ENCODE measurements at regions of chr3 and their contacts with region 1.

Region 1: GRCh38 chr3:188262913-188263683 is 109.1 kb downstream of the LPP start:
- DNase-seq: peak in 4 of 5 donors; percentile 47 to 60 (median 50)
- ATAC-seq: peak; percentile 79 to 88 (median 86)
- H3K4me3 ChIP-seq: no peak overlapping the region
- H3K27ac ChIP-seq: peak overlapping the region; percentile 74 to 96 (median 89)
- H3K4me1 ChIP-seq: peaks cover 2 to 94% (median 64%) of the 10 kb centered on the region in 12 donors
- H3K27me3 ChIP-seq: no peaks in the 10 kb centered on the region
- CTCF ChIP-seq: peak in 1 of 12 donors; percentile 7
- POLR2A ChIP-seq: no peak

Region 2: DNA sequence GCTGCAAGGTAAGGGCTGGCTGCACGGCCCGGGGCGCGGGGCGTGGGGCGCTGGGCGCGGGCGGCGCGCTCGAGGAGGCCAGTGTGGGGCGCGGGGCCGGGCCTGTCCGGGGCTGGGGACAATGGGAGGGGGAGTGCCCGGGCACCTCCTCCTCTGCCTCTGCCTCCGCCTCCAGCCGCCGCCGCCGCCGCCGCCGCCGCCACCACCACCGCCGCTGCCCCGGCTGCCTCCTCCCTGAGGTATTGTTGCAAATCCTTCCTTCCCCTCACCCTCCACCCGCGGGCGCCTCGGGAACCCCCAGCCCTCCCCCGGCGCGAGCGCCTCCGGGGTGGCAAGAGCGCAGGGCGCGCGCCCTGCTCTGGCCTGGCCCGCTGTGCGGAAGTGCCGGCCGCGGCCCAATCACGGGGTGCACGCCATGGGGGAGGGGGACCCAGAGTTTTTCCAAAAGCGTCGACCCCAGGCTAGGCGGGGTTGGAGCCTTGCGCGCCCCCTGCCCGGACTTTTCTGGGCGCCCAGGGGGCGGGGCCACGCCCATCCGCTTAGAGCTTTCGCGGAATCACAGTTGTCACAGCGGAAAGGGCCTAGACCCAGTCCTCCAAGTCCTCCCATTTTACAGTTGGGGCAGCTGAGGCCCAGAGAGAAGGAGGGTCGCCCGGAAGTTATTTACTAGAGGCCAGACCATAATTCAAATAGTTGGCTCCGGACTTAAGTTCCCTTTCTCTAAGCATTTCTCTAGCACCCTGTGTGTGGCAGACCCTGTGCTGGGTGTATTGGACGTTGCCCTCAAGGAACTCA is 108.9 kb before region 1 on chr3 and contains the start of gene LPP:
- intact Hi-C with region 1: loop called in 5 of 10 experiments (anchors 5 to 10 kb)
- DNase-seq: peak; percentile 83 to 92 (median 86)
- ATAC-seq: peak; percentile 67 to 93 (median 82)
- H3K4me3 ChIP-seq: peak within 1 kb of the TSS; percentile 68 to 94 (median 86)
- H3K27ac ChIP-seq: peak within 1 kb of the TSS; percentile 90 to 99 (median 97)
- H3K4me1 ChIP-seq: peaks cover 0 to 62% (median 41%) of the 10 kb centered on the region in 12 donors
- H3K27me3 ChIP-seq: no peaks in the 10 kb centered on the region
- CTCF ChIP-seq: peak in 2 of 12 donors; percentile 7 to 25
- POLR2A ChIP-seq: no peak
- total RNA-seq, gene LPP: 76.6 to 178 (median 111) TPM

Region 3: DNA sequence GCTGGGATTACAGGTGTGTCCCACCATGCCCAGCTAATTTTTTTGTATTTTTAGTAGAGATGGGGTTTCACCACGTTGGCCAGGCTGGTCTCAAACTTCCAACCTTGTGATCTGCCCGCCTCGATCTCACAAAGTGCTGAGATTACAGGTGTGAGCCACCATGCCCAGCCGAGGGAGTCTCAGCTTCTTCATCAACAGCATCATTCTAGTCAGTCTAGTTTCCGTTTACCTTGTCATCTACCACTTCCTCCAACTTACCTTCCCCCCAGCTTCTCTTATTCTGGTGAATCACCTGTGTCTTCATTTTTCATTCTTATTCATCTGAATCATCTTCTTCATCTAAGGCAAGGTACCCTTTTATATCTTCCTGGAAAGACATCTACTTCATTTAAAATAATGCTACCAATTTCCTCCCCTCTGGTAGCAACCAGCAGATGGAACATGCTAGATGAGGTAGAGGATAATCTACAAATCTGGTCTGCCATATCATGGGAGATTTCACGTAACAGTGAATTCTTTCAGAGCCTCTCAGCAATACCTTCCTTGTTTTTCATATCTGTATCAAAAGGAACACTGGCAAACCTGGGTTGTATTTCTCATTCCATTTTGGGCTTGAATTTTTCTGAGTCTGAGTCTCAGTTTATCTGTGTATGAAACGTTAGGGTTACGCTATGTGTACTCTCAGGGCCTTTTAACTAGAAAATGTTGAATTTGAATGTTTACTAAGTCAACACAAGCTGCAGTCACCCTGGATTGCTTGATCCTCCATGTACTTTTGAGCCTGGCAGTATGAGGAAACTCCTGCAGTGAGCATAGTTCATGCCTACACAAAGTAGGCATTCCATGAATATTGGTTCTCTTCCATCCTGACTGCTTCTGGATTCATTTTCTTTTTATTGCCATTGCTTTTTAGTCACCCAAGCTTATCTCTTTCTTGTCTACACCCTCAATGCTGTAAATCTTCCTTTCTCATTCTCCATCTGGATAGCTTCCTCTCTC is 92.3 kb before region 1 on chr3:
- intact Hi-C with region 1: no loop called
- DNase-seq: no peak
- ATAC-seq: no peak
- H3K4me3 ChIP-seq: no peak overlapping the region
- H3K27ac ChIP-seq: peak overlapping the region in 11 of 12 donors; percentile 6 to 86 (median 67)
- H3K4me1 ChIP-seq: peaks cover 0 to 82% (median 48%) of the 10 kb centered on the region in 12 donors
- H3K27me3 ChIP-seq: no peaks in the 10 kb centered on the region
- CTCF ChIP-seq: no peak
- POLR2A ChIP-seq: no peak

Region 4: DNA sequence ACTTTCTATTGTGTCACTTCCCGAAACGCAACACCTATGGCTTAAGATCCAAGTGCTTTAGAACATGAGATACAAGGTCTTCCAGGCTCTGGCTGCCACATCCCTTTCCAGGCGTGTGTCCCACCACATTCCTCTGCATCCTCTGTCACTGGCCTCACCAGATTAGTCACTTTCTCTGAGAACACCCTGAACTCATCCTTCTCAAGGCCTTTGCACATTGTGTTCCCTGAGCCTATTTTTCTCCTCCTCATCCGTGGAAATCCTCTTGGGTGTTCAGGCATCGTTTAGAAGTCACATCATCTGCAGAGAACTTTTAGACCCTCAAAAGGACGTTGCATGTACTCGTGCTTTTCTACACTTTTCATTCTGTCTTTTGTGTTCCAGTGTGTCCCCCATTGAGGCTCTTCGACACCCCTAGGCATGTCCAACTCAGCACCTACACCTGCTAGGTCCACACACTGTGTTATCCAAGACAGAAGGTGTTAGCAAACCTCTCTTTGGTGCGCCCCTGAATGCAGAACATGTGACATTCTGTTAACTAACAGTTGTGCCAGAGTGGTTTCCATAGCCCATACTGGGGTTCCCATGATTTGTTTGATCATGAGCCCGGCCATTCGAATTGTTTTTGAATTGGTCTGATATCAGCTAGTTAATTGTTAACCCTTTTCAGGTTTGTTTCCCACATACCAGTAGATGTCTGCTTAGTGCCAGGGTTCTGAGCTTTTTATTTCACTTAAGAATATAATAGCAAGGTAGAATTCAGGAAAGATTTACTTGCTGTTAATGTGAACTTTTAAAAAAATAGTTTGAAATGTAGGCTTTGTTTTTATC is 41.9 kb before region 1 on chr3:
- intact Hi-C with region 1: loop called in 1 of 10 experiments (anchors 5 kb)
- DNase-seq: peak in 1 of 5 donors; percentile 76
- ATAC-seq: peak; percentile 77 to 91 (median 90)
- H3K4me3 ChIP-seq: no peak overlapping the region
- H3K27ac ChIP-seq: peak overlapping the region; percentile 32 to 90 (median 66)
- H3K4me1 ChIP-seq: peaks cover 0 to 77% (median 47%) of the 10 kb centered on the region in 12 donors
- H3K27me3 ChIP-seq: no peaks in the 10 kb centered on the region
- CTCF ChIP-seq: no peak
- POLR2A ChIP-seq: peak in 1 of 2 donors; percentile 28

Region 5: DNA sequence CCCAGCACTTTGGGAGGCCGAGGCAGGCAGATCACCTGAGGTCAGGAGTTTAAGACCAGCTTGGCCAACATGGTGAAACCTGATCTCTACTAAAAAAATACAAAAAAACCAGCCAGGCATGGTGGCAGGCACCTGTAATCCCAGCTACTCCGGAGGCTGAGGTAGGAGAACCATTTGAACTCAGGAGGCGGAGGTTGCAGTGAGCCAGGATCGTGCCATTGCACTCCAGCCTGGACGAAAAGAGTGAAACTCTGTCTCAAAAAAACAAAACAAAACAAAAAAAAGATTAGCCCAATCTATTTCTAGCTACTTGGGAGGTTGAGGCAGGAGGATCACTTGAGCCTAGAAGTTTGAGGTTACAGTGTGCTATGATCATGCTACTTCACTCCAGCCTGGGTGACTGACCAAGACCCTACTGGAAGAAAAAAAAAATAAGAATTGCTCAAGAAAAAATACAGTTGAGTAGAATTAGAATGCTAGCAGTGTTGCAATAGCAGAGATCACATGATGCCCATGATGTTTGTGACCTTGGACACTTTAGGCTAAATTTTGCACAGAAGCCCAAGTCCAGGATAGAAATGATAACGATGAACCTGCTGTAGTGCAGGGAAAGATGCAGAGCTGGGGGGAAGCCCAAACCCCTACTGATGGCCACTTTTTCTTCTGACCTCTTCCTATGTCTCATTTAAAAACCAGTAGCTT is 53.1 kb after region 1 on chr3:
- intact Hi-C with region 1: no loop called
- DNase-seq: no peak
- ATAC-seq: peak in 3 of 4 donors; percentile 11 to 50 (median 24)
- H3K4me3 ChIP-seq: no peak overlapping the region
- H3K27ac ChIP-seq: peak overlapping the region in 7 of 12 donors; percentile 1 to 52 (median 12)
- H3K4me1 ChIP-seq: peaks cover 0 to 44% (median 20%) of the 10 kb centered on the region in 12 donors
- H3K27me3 ChIP-seq: no peaks in the 10 kb centered on the region
- CTCF ChIP-seq: no peak
- POLR2A ChIP-seq: no peak

Region 6: GRCh38 chr3:188339410-188340295 is 76.6 kb after region 1 on chr3:
- intact Hi-C with region 1: loop called in 1 of 10 experiments (anchors 5 kb)
- DNase-seq: no peak
- ATAC-seq: no peak
- H3K4me3 ChIP-seq: no peak overlapping the region
- H3K27ac ChIP-seq: peak overlapping the region in 9 of 12 donors; percentile 2 to 55 (median 18)
- H3K4me1 ChIP-seq: peaks cover 0 to 45% (median 20%) of the 10 kb centered on the region in 12 donors
- H3K27me3 ChIP-seq: no peaks in the 10 kb centered on the region
- CTCF ChIP-seq: no peak
- POLR2A ChIP-seq: no peak

Region 7: GRCh38 chr3:188578576-188579363 is 315.7 kb after region 1 on chr3:
- intact Hi-C with region 1: loop called in 1 of 10 experiments (anchors 10 kb)
- DNase-seq: peak; percentile 69 to 80 (median 78)
- ATAC-seq: peak; percentile 95 to 98 (median 96)
- H3K4me3 ChIP-seq: no peak overlapping the region
- H3K27ac ChIP-seq: peak overlapping the region in 11 of 12 donors; percentile 25 to 85 (median 68)
- H3K4me1 ChIP-seq: peaks cover 0 to 48% (median 20%) of the 10 kb centered on the region in 12 donors
- H3K27me3 ChIP-seq: no peaks in the 10 kb centered on the region
- CTCF ChIP-seq: no peak
- POLR2A ChIP-seq: no peak

Region 8: DNA sequence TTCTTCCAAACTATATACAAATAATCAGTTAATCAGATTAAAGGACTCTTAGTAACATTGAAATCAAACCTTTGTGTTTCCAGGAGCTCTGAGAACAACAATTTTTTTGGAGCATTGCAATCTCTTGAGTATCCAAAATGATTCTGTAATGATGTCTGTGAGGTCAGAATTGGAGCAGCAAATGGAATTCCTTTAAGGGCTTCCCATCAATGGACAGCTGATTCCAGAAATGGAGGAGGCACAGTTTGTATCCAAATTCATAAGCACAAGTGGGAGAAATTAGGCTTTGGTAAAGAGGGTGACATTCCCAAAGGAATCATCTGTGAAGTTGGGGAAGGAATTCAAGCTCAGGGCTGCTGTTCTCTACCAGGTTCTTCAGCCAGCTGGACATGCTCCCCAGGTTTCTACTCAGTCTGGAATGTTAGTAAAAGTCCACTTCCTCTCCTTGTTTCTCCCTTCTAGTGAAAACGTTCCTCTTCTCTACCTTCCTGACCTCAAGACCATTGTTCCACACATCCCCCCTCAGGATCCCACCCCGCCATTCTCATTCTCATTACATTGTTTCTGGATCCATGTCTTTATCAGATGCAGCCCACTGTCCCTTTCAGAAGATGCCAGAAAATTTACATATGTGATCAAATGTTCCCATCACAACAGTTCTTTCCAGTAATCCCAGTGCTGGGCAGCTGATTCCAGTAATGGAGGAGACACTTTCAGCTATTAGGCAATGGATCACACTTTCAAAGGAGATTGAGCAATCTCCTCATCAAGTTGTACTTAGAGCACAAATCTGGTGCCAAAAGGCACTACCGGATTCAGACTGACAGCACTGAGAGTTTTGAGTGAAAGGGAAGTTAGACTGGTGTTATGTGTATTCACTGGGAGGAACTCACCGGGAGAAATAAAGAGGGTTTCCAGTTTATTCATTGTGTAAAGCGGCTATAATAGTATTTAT is 517.4 kb after region 1 on chr3:
- intact Hi-C with region 1: no loop called
- DNase-seq: peak in 2 of 5 donors; percentile 34 to 39
- ATAC-seq: peak; percentile 52 to 92 (median 67)
- H3K4me3 ChIP-seq: no peak overlapping the region
- H3K27ac ChIP-seq: peak overlapping the region in 11 of 12 donors; percentile 17 to 87 (median 54)
- H3K4me1 ChIP-seq: peaks cover 5 to 74% (median 27%) of the 10 kb centered on the region in 12 donors
- H3K27me3 ChIP-seq: no peaks in the 10 kb centered on the region
- CTCF ChIP-seq: no peak
- POLR2A ChIP-seq: no peak